Colonic mucosa (tissue), 4 donors: ENCODE measurements at regions of chr1 and their contacts with region 1.

Region 1: DNA sequence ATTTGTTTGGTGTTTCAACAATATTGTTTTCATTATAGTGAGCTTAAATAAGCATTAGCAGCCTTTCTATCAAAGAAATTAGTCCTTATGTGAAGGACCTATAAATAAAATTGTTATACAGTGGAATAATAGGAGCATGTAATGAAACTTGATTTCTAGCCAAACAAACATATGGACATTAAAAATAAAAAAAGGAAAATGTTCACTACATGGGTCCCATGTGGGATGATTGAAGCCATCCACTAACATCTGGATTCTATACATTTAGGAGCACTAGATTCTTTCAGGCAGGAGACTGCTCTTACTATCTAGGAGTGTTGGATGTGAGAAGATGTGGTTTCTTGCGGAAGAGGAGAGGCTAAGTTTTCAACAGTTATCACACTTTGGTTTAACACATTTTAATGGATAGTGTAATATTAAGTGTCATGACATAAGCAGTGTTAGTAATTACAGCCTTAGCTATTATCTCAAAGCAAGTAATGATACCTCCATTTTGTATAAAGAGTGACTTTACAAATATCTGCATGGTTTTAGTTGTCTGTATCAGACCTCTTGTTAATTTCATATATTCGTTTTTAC is 62.3 kb downstream of the LYPLAL1 start:
- DNase-seq: no peak
- H3K4me3 ChIP-seq: no peak overlapping the region
- H3K27ac ChIP-seq: no peak overlapping the region
- H3K4me1 ChIP-seq: no peaks in the 10 kb centered on the region
- H3K27me3 ChIP-seq: no peaks in the 10 kb centered on the region
- CTCF ChIP-seq: no peak

Region 2: GRCh38 chr1:217896490-217896889 is 1339.5 kb before region 1 on chr1:
- intact Hi-C with region 1: no loop called
- DNase-seq: no peak
- H3K4me3 ChIP-seq: no peak overlapping the region
- H3K27ac ChIP-seq: no peak overlapping the region
- H3K4me1 ChIP-seq: no peaks in the 10 kb centered on the region
- H3K27me3 ChIP-seq: no peaks in the 10 kb centered on the region
- CTCF ChIP-seq: no peak

Region 3: GRCh38 chr1:219138747-219139146 is 97.2 kb before region 1 on chr1:
- intact Hi-C with region 1: no loop called
- DNase-seq: no peak
- H3K4me3 ChIP-seq: no peak overlapping the region
- H3K27ac ChIP-seq: no peak overlapping the region
- H3K4me1 ChIP-seq: no peaks in the 10 kb centered on the region
- H3K27me3 ChIP-seq: no peaks in the 10 kb centered on the region
- CTCF ChIP-seq: no peak

Region 4: GRCh38 chr1:219257751-219258150 is 21.8 kb after region 1 on chr1:
- intact Hi-C with region 1: loop called (anchors 2 kb)
- DNase-seq: no peak
- H3K4me3 ChIP-seq: no peak overlapping the region
- H3K27ac ChIP-seq: no peak overlapping the region
- H3K4me1 ChIP-seq: no peaks in the 10 kb centered on the region
- H3K27me3 ChIP-seq: no peaks in the 10 kb centered on the region
- CTCF ChIP-seq: no peak

Region 5: DNA sequence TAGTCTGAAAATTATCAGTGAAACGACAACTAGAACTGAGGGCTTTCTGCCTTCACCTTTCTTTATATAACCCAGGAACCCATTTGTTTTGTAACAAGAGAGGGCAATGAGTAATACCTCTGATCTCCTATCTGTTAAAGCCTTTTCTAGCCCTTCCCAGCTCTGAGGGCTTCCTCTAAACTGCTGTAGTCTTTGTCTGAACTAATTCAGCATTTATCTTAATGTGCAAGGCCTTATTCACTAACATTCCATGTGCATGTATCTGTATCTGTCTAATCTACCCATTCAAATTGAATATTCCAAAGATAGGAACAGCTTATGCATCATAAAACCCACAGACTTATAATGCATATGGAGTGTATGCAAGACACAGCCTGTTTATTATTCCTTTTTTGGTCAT is 104.8 kb after region 1 on chr1:
- intact Hi-C with region 1: no loop called
- DNase-seq: no peak
- H3K4me3 ChIP-seq: no peak overlapping the region
- H3K27ac ChIP-seq: no peak overlapping the region
- H3K4me1 ChIP-seq: no peaks in the 10 kb centered on the region
- H3K27me3 ChIP-seq: no peaks in the 10 kb centered on the region
- CTCF ChIP-seq: no peak

Region 6: DNA sequence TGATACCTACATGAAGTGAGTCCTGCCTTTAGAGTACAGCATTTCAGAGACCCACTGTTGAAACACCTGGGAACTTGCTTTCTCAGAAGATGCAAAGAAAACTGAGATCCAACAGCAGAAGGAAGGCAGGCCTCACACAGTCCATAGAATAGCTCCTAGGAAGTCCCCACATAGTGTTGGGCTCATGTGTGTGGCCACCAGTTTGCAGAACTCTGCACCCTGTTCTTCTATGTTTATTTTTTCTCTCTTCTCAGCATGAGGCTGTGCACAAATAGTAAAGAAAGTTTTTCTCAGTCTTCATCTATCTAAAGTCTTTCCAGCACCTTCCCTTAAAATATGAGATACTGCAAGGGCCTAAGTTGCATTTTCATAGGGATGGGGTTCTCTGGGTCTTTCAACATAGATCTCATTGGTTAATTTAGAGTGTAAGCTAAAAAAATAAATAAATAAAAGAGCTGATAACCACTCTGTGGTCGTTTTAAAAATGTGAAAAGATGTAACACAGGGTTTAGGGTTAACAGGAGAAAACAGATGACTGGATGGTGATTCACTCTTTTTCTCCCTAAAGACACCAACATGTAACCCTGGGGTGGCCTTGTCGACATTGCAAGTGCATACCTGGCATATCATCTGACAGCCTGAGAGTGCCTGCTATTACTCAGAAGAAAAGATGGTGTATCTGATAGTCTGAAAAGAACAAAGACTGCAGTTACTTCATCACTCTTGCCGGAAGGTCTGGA is 282.3 kb after region 1 on chr1:
- intact Hi-C with region 1: no loop called
- DNase-seq: no peak
- H3K4me3 ChIP-seq: no peak overlapping the region
- H3K27ac ChIP-seq: no peak overlapping the region
- H3K4me1 ChIP-seq: no peaks in the 10 kb centered on the region
- H3K27me3 ChIP-seq: no peaks in the 10 kb centered on the region
- CTCF ChIP-seq: no peak